ENCODE measurements at regions of chr5 and their contacts with region 1.

Region 1: GRCh38 chr5:171387345-171387969 is at the start of gene NPM1:
- DNase-seq: peak; percentile 96 to 97
- ATAC-seq: peak; percentile 96
- H3K4me3 ChIP-seq: peak within 1 kb of the TSS; percentile 75 to 94 (median 85)
- H3K27ac ChIP-seq: peak within 1 kb of the TSS; percentile 89 to 95 (median 92)
- H3K4me1 ChIP-seq: peaks cover 27 to 51% of the 10 kb centered on the region in 2 donors
- H3K27me3 ChIP-seq: no peaks in the 10 kb centered on the region
- CTCF ChIP-seq: no peak
- POLR2A ChIP-seq: peak; percentile 87 to 94
- total RNA-seq, gene NPM1: 277 to 651 (median 413) TPM

Region 2: DNA sequence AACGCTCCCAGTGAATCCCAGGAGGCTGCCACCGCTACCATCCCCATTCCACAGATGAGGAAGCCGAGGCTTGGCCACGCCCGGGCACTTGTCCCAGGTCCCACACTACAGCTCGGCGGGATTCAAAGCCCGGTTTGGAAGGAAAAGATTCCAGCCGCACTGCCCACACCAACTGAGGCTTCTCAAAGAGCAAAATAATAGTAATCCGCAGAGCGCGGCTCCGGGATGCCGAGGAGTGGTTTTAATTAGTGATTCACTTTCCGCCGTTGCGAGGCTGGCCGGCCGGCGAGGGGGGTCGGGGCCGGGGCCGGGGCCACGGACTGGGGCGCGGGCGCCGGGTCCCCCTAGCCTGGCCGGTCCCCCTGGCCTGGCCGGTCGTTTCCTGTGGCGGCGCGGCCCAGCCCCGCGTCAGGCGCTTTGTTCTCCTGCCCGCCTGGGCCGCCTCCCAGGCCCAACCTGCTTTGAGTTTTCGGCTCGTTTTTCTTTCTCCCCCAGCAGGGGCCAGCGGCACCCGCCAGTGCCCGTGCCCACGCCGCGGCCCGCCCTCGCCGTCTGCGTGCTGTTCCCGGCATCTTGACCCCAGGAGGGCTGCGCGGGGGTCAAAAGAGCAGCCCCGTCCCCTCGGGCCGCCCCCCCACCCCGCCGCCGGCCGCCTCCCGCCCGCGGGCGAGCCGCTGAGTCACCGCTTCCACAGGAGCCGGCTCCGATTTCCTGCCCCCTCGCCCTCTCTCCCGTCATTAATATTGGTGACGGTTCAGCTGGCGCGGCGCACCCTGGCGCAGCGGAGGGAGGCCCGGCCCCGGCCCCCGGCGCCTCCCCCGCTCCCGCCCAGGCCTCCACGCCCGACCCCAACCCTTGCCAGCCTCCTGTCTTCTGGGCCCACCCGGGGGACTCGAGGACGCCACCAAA is 63.2 kb after region 1 on chr5:
- in situ Hi-C with region 1: no loop called
- intact Hi-C with region 1: loop called (anchors 2 kb)
- DNase-seq: peak; percentile 36 to 45
- ATAC-seq: peak; percentile 86 to 87
- H3K4me3 ChIP-seq: peak overlapping the region; percentile 48 to 69 (median 59)
- H3K27ac ChIP-seq: peak overlapping the region; percentile 64 to 81 (median 72)
- H3K4me1 ChIP-seq: no peaks in the 10 kb centered on the region
- H3K27me3 ChIP-seq: no peaks in the 10 kb centered on the region
- CTCF ChIP-seq: no peak
- POLR2A ChIP-seq: no peak

Region 3: DNA sequence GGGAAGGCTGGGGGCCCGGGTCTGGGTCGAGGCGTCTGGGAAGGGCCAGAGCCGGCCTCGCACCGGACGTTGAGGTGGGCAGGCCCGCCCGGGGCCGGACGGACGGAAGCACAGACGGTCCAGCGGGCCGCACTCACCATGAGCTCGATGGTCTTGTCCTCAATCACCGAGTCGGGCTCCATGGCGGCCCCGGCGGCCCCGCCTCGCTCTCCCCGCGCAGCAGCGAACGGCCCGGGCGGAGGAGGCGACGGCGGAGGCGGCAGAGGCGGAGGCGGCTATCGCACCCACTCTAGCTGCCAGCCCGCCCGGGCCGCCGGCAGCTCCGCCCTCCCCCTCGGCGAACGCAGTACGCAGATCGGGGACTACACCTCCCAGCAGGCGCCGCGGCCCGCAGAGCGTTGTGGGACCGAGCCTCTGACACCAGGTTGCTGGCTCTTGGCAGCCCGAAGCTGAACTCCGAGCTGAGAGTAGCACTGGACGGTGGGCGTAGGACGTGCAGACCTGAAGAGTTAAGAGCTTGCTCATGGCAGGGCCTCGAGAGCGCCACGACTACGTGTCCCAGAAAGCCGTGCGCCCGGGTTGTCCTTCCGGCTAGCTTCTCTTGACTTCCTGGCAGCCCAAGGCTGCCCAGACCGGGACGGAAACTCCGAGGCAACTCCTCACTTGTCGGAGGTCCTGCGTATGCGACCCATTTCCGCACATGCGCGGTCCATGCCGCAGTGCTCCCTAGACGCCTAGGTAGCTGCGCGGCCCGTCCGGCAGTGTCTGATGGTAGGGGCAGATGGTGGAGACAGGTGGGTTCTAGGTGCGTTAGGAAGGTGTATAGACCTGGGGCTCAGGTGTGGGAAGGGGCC is 619.1 kb after region 1 on chr5 and contains the start of gene FBXW11:
- in situ Hi-C with region 1: no loop called
- intact Hi-C with region 1: loop called (anchors 2 kb)
- DNase-seq: peak; percentile 93 to 95
- ATAC-seq: peak; percentile 95 to 96
- H3K4me3 ChIP-seq: peak within 1 kb of the TSS; percentile 80 to 99 (median 98)
- H3K27ac ChIP-seq: peak within 1 kb of the TSS; percentile 89 to 99 (median 94)
- H3K4me1 ChIP-seq: peaks cover 46 to 49% of the 10 kb centered on the region in 2 donors
- H3K27me3 ChIP-seq: no peaks in the 10 kb centered on the region
- CTCF ChIP-seq: peak in 1 of 5 experiments; percentile 9
- POLR2A ChIP-seq: peak; percentile 76 to 77
- total RNA-seq, gene FBXW11: 68.5 to 80.8 (median 72.2) TPM

Region 4: DNA sequence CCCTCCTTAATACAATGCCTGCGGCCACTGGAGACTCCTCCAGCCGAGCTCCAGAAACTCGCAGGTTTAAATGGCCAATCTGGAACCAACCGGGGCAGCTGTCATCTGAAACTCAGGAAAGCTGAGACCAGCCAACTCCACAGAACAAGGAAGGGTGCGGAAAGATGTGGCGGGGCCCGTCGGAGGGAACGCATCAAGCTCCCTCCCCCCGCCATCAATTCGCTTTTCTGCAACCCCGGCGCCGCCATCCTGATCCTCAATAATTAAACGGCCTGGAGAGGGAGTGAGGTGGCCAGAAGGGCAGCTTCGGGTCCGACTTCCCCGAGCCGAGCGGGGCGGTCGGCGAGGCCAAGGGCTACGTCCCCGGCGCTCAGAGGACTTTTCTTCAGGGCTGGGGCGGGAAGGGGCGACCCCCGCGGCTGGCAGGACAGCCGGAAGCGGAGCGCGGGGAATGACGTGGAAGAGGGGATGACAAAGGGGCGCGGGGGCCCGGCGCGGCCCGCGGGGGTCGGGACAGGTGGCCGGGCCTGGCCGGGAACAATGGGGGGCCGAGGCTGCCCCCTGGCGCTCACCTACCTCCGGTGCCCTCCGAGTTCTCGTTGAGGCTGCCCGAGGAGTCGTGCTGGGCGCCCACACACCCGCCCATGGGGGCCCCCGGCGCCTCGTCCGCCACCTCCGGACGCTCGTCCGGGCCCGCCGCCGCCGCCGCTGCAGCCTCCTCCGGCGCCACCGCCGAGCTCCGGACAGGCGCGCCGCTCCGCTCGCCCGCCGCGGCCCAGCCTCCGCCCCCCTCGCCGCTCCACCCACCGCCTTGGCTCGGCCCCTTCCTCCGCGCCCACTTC is 895.8 kb after region 1 on chr5 and contains the start of gene UBTD2:
- in situ Hi-C with region 1: no loop called
- intact Hi-C with region 1: loop called (anchors 1 kb)
- DNase-seq: peak; percentile 64 to 73
- ATAC-seq: peak; percentile 90 to 92
- H3K4me3 ChIP-seq: peak within 1 kb of the TSS; percentile 85 to 100 (median 91)
- H3K27ac ChIP-seq: peak within 1 kb of the TSS; percentile 91 to 98 (median 94)
- H3K4me1 ChIP-seq: peaks cover 16 to 21% of the 10 kb centered on the region in 2 donors
- H3K27me3 ChIP-seq: no peaks in the 10 kb centered on the region
- CTCF ChIP-seq: peak; percentile 39 to 73 (median 58)
- POLR2A ChIP-seq: no peak
- total RNA-seq, gene UBTD2: 6.0 to 11.4 (median 9.8) TPM

Measured in gastrocnemius medialis (tissue), 4 donors.